ENCODE measurements at regions of chr4 and their contacts with region 1.

Region 1: GRCh38 chr4:15681207-15682015 is at the start of gene FAM200B:
- DNase-seq: peak; percentile 97
- ATAC-seq: peak; percentile 96
- H3K4me3 ChIP-seq: peak within 1 kb of the TSS; percentile 86
- H3K27ac ChIP-seq: peak within 1 kb of the TSS; percentile 98
- H3K4me1 ChIP-seq: peaks cover 7% of the 10 kb centered on the region
- H3K27me3 ChIP-seq: no peaks in the 10 kb centered on the region
- CTCF ChIP-seq: peak; percentile 22; the same call in 1 of the 2 replicates
- POLR2A ChIP-seq: peak; percentile 94
- RAD21 ChIP-seq: peak; percentile 44; the same call in 1 of the 2 replicates
- total RNA-seq, gene FAM200B: 16.7 and 20.6 TPM in 2 replicates

Region 2: GRCh38 chr4:15655229-15656037 is 26.0 kb before region 1 on chr4 and contains the start of gene FBXL5:
- CTCF ChIA-PET with region 1: interaction called, 3 read pairs
- POLR2A ChIA-PET with region 1: no interaction called
- dilution Hi-C with region 1: no loop called
- in situ Hi-C with region 1: no loop called
- intact Hi-C with region 1: loop called (anchors 2 kb)
- DNase-seq: peak; percentile 84
- ATAC-seq: peak; percentile 81
- H3K4me3 ChIP-seq: peak within 1 kb of the TSS; percentile 96
- H3K27ac ChIP-seq: peak within 1 kb of the TSS; percentile 97
- H3K4me1 ChIP-seq: peaks cover 17% of the 10 kb centered on the region
- H3K27me3 ChIP-seq: no peaks in the 10 kb centered on the region
- CTCF ChIP-seq: no peak
- POLR2A ChIP-seq: no peak; the same call in 1 of the 2 replicates
- RAD21 ChIP-seq: no peak
- total RNA-seq, gene FBXL5: 62.6 and 91.9 TPM in 2 replicates

Region 3: DNA sequence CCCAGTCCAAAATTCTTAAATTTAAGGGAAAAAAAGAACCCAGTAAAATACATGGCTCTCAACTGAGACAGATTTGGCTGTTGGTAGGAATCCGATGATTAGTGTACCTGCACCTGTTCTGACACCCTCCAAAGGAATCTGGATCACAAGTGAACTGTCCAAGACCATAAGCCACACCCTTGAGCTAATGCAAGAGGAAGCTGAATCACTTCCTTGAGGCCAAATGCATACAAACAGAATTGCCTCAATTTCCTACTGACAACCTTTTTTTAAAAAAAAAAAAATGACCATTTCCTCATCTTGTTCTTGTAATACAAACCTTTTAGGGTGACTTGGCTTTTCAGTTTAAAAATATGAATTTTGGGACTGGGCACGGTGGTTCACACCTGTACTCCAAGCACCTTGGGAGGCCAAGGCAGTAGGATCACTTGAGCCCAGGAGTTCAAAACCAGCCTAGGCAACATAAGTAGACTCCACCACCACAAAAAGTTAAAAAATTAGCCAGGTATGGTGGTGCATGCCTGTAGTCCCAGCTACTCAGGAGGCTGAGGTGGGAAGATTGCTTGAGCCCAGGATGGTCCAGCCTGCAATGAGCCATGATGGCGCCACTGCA is 15.6 kb before region 1 on chr4:
- CTCF ChIA-PET with region 1: interaction called, 10 read pairs
- POLR2A ChIA-PET with region 1: no interaction called
- dilution Hi-C with region 1: no loop called
- in situ Hi-C with region 1: no loop called
- intact Hi-C with region 1: no loop called
- DNase-seq: peak; percentile 58
- ATAC-seq: no peak
- H3K4me3 ChIP-seq: no peak overlapping the region
- H3K27ac ChIP-seq: no peak overlapping the region
- H3K4me1 ChIP-seq: peaks cover 5% of the 10 kb centered on the region; the same call in 1 of the 2 replicates
- H3K27me3 ChIP-seq: no peaks in the 10 kb centered on the region
- CTCF ChIP-seq: no peak
- POLR2A ChIP-seq: no peak
- RAD21 ChIP-seq: no peak

Region 4: GRCh38 chr4:16157609-16158503 is 476.4 kb after region 1 on chr4:
- CTCF ChIA-PET with region 1: no interaction called
- POLR2A ChIA-PET with region 1: no interaction called
- dilution Hi-C with region 1: no loop called
- in situ Hi-C with region 1: no loop called
- intact Hi-C with region 1: no loop called
- DNase-seq: no peak
- ATAC-seq: peak; percentile 21; the same call in 1 of the 2 replicates
- H3K4me3 ChIP-seq: no peak overlapping the region
- H3K27ac ChIP-seq: no peak overlapping the region
- H3K4me1 ChIP-seq: no peaks in the 10 kb centered on the region
- H3K27me3 ChIP-seq: no peaks in the 10 kb centered on the region
- CTCF ChIP-seq: no peak
- POLR2A ChIP-seq: no peak
- RAD21 ChIP-seq: no peak

Measured in IMR-90 (cell line).